ENCODE measurements at regions of chr17 and their contacts with region 1.

Region 1: DNA sequence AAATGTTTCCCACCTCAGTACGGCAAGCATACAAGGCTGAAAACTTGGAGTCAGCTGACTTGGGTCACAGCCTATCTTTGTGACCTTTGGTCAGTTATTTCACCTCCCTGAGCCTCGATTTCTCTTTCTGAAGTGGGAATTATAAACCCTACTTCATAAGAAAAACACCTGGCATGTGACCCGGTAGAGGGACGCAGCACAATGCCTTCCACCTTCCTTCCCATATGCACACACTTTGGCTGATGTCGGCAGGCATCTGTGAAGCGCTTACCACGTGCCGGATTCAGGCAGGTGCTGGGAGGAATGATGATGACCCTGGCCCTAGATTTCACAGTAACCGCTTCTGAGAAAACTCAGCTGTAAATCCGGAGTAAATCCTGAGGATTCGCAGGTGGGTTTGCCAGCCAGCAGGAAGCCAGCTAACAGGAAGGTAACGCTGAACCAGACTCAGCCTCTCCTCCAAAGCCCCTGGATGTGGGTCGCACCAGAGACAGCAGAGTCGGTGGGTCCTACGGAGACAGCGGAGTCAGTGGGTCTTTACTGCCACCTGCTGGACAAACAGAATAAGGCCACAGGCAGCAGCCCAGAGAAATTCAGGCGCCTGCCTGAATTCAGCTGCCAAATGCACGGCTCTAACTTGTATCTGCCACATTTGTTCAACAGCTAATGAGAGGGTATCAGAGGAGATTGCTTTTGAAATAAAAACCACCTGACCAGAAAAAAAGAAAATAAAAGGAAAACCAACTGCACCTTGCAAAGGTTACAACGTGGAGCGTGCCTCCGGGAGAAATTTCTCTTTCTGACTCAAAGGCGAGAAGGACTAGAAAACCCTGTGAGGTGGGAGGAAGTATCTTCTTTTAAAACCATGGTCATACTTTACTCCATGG is 16.6 kb downstream of the COPRS start:
- DNase-seq: peak; percentile 85
- H3K4me3 ChIP-seq: no peak overlapping the region
- H3K27ac ChIP-seq: peak overlapping the region in 1 of 2 donors; percentile 17
- H3K4me1 ChIP-seq: peaks cover 12% of the 10 kb centered on the region
- H3K27me3 ChIP-seq: no peaks in the 10 kb centered on the region
- CTCF ChIP-seq: peak; percentile 93 to 97 (median 95)
- POLR2A ChIP-seq: no peak

Region 2: GRCh38 chr17:31558748-31559644 is 283.4 kb before region 1 on chr17:
- intact Hi-C with region 1: loop called (anchors 5 kb)
- DNase-seq: peak; percentile 70
- H3K4me3 ChIP-seq: peak overlapping the region; percentile 62 to 66
- H3K27ac ChIP-seq: peak overlapping the region; percentile 39 to 72
- H3K4me1 ChIP-seq: no peaks in the 10 kb centered on the region
- H3K27me3 ChIP-seq: no peaks in the 10 kb centered on the region
- CTCF ChIP-seq: peak; percentile 76 to 88 (median 79)
- POLR2A ChIP-seq: no peak